OCI-LY7 (cell line): ENCODE measurements at regions of chr14 and their contacts with region 1.

Region 1: GRCh38 chr14:68248481-68249255 is 429.1 kb downstream of the RAD51B start:
- DNase-seq: peak; percentile 85
- H3K4me3 ChIP-seq: peak overlapping the region; percentile 2
- H3K27ac ChIP-seq: peak overlapping the region; percentile 66
- H3K4me1 ChIP-seq: peaks cover 60% of the 10 kb centered on the region
- CTCF ChIP-seq: peak; percentile 92

Region 2: DNA sequence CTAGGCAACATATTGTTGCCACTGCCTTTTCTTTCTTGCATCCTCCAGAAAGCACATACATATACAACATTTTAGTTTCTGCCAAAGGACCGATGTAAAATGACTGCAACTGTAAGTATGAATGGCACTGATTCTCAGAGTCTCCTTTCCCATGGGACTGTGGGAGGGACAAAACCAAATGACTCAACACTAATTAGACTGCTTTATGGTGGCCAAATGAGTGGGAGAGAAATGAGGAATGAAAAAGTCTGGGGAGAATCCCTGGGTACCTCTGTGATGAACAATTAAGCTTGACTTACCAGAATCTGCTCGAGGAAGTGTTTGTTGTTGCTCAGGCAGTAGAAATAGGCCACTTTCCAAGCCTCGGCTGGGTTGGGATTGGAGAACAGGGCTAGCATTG is 442.4 kb before region 1 on chr14:
- CTCF ChIA-PET with region 1: no interaction called
- POLR2A ChIA-PET with region 1: no interaction called
- intact Hi-C with region 1: no loop called
- DNase-seq: no peak
- H3K4me3 ChIP-seq: no peak overlapping the region
- H3K27ac ChIP-seq: no peak overlapping the region
- H3K4me1 ChIP-seq: no peaks in the 10 kb centered on the region
- CTCF ChIP-seq: no peak

Region 3: DNA sequence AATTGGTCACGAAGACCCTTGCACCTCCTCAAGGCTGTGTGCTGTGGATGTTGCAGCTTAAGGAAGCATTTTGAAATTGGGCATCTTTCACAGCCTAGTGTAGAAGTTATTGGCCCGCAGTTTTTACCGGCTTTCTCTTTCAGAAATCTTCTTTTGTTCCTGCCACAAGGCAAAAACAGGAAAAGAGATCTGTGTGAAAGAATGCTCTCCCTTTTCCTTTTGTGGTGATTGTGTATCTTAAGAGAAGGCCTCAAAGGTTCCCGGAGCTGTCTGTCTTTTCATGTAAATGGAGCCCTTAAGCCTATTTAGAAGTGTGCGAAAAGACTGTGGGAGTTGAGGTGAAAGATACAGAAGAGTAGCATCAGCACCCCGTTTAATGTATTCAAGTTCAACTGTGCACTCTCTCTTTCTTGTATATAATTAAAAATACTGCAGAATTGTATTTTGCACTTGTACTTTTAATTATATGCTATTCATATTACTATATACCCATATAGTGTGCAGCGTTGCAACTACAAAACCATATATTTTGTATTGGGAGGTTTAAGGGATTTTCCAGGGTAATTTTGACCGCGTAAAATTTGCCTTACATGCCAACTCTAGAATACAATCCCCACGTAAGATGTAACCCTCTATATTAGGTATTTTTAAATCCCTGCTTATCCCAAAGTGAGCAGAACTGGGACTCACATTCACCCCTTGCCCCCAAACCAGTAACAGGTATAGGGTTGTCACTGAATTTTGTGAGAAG is 12.6 kb after region 1 on chr14:
- CTCF ChIA-PET with region 1: interaction called, 3 read pairs
- POLR2A ChIA-PET with region 1: interaction called, 22 read pairs
- intact Hi-C with region 1: no loop called
- DNase-seq: no peak
- H3K4me3 ChIP-seq: peak overlapping the region; percentile 5
- H3K27ac ChIP-seq: peak overlapping the region; percentile 3
- H3K4me1 ChIP-seq: peaks cover 78% of the 10 kb centered on the region
- CTCF ChIP-seq: no peak

Region 4: GRCh38 chr14:68292441-68293215 is 44.0 kb after region 1 on chr14:
- CTCF ChIA-PET with region 1: interaction called, 3 read pairs
- POLR2A ChIA-PET with region 1: interaction called, 3 read pairs
- intact Hi-C with region 1: loop called (anchors 2 kb)
- DNase-seq: no peak
- H3K4me3 ChIP-seq: peak overlapping the region; percentile 31
- H3K27ac ChIP-seq: peak overlapping the region; percentile 81
- H3K4me1 ChIP-seq: peaks cover 64% of the 10 kb centered on the region
- CTCF ChIP-seq: no peak

Region 5: GRCh38 chr14:68408680-68409079 is 160.0 kb after region 1 on chr14:
- CTCF ChIA-PET with region 1: no interaction called
- POLR2A ChIA-PET with region 1: interaction called, 3 read pairs
- intact Hi-C with region 1: loop called (anchors 2 kb)
- DNase-seq: peak; percentile 53
- H3K4me3 ChIP-seq: no peak overlapping the region
- H3K27ac ChIP-seq: no peak overlapping the region
- H3K4me1 ChIP-seq: peaks cover 34% of the 10 kb centered on the region
- CTCF ChIP-seq: peak; percentile 76

Region 6: DNA sequence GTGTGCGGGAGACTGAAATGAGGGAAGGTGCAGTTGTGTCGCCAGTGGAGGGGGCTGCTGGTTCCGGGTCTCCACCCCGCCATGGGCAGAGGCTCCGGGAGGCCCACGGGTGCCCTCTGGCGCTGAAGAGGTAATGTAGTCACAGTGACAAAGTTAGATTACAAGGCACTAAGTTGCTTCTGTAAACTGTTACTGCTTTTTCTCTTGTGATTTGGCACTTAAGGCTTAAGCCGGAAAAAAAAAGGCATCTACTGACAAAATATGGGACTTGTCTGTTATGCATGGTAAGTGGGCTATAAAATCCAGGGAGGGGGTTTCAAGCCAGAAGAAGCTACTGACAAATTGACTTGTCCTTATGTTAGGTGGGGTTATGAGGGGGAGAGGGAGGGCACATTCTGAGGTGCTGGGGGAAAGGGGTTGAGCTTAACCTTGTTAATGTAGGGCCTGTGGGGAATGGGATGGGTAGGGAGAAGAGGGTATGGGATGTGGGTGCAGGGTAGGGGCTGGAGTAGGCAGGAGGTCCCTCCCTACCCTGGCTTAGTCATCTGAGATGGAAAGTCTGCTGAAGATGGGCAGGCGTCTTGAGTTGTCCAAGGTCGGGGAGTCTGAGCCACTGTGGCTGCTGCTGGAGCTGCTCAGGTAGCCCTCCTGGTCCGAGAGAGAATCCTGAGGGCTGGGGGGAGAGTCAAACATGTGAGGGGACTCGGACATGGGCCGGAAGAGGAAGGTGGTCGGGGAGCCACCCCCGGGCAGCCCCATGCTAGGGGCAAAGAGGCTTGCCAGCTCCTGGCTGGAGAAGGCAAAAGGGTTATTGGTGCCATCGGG is 540.5 kb after region 1 on chr14:
- CTCF ChIA-PET with region 1: interaction called, 7 read pairs
- POLR2A ChIA-PET with region 1: interaction called, 4 read pairs
- intact Hi-C with region 1: loop called (anchors 1 kb)
- DNase-seq: peak; percentile 89
- H3K4me3 ChIP-seq: peak overlapping the region; percentile 87
- H3K27ac ChIP-seq: peak overlapping the region; percentile 92
- H3K4me1 ChIP-seq: peaks cover 56% of the 10 kb centered on the region
- CTCF ChIP-seq: peak; percentile 90

Region 7: DNA sequence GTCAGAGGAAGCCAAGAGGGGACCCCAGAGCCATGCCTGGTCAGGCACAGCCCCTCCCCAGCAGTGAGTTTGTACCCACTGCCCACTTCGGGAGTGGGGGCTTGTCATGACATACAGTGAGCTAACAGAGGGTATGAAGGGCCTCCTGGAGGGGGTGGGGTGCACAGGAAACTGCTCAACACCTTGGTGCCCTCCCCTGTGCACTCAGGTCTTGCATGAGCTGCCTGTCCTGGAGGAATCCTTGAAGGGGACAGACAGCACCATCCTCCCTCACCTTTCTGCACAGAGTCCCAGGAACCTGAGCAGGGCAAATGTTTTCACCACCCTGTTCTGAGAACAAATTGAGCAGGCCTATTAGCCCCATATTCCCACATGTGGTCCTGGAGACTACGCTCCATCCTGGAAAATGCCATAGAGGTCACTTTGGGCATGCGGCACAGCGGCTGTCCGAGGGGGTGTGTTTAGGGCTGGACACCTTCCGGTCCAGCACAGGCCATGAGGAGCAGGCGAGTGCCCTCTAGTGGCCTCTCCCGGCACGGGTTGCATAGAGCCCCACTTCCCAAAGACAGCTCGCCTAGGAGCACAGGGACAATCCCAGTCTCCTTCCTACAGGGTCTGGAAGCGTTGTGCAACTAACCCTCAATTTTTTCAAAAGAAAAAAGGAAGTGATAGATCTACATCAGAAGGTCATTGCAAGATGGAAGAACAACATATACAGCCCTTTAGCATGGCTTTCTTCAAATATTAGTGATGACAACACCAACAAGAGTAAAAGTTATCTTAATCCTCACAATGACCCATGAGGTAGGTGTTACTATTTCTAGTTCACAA is 576.1 kb after region 1 on chr14:
- CTCF ChIA-PET with region 1: interaction called, 4 read pairs
- POLR2A ChIA-PET with region 1: interaction called, 4 read pairs
- intact Hi-C with region 1: loop called (anchors 2 kb)
- DNase-seq: peak; percentile 65
- H3K4me3 ChIP-seq: no peak overlapping the region
- H3K27ac ChIP-seq: no peak overlapping the region
- H3K4me1 ChIP-seq: peaks cover 45% of the 10 kb centered on the region
- CTCF ChIP-seq: peak; percentile 99